Adrenal gland (tissue), 19 donors: ENCODE measurements at regions of chr1 and their contacts with region 1.

Region 1: DNA sequence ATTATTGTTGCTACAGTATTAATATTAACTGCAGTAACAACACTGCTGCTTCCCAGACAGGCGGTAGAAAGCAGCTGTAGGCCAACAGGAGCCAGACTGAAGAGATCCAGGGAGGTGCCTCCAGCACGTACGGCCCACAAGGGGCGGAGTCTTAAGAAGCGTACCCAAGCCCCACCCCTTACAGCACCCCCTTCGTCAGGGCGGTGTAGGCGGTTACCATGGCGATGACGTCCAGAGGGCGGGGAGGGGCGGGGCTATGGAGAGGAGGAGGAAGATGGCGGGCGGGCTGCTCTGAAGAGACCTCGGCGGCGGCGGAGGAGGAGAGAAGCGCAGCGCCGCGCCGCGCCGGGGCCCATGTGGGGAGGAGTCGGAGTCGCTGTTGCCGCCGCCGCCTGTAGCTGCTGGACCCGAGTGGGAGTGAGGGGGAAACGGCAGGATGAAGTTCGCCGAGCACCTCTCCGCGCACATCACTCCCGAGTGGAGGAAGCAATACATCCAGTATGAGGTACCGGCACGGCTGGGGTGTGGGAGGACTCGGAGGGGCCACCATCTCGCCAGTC is at the start of gene XPR1:
- DNase-seq: peak; percentile 99
- H3K4me3 ChIP-seq: peak within 1 kb of the TSS; percentile 50 to 94 (median 82)
- H3K27ac ChIP-seq: peak within 1 kb of the TSS; percentile 27 to 95 (median 89)
- H3K4me1 ChIP-seq: peaks cover 10 to 28% of the 10 kb centered on the region in 2 donors
- H3K27me3 ChIP-seq: no peaks in the 10 kb centered on the region
- CTCF ChIP-seq: peak; percentile 27 to 69 (median 46)
- POLR2A ChIP-seq: peak; percentile 69 to 93
- total RNA-seq, gene XPR1: 16.1 to 53.0 (median 26.2) TPM

Region 2: DNA sequence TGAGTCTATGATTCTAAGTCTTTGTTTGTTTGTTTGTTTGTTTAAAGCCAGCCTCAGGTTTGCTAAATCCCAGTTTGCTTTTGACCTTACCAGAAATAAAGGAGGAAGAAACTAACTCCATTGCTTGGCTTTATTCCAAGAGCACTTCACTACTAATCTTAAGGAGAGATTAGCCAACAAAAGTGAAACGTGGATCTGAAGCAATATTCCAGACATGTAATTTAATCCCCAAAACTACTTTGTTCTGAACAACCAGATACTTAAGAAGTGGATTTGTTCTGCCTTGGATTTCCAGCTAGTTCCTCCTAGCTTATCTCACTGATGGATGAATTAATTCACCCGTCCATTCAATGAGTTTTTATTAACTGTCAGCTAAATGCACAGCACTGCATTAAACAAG is 693.1 kb before region 1 on chr1:
- intact Hi-C with region 1: no loop called
- DNase-seq: no peak
- H3K4me3 ChIP-seq: no peak overlapping the region
- H3K27ac ChIP-seq: no peak overlapping the region
- H3K4me1 ChIP-seq: peaks cover 0 to 8% of the 10 kb centered on the region in 2 donors
- H3K27me3 ChIP-seq: no peaks in the 10 kb centered on the region
- CTCF ChIP-seq: no peak
- POLR2A ChIP-seq: no peak

Region 3: GRCh38 chr1:180533266-180533987 is 98.4 kb before region 1 on chr1:
- intact Hi-C with region 1: loop called in 1 of 2 experiments (anchors 5 kb)
- DNase-seq: peak; percentile 68 to 90 (median 77)
- H3K4me3 ChIP-seq: no peak overlapping the region
- H3K27ac ChIP-seq: no peak overlapping the region
- H3K4me1 ChIP-seq: no peaks in the 10 kb centered on the region
- H3K27me3 ChIP-seq: no peaks in the 10 kb centered on the region
- CTCF ChIP-seq: peak; percentile 71 to 93 (median 87)
- POLR2A ChIP-seq: no peak

Region 4: GRCh38 chr1:180579961-180580611 is 51.8 kb before region 1 on chr1:
- intact Hi-C with region 1: no loop called
- DNase-seq: peak; percentile 79 to 91 (median 85)
- H3K4me3 ChIP-seq: no peak overlapping the region
- H3K27ac ChIP-seq: peak overlapping the region; percentile 44 to 82 (median 51)
- H3K4me1 ChIP-seq: peaks cover 15 to 27% of the 10 kb centered on the region in 2 donors
- H3K27me3 ChIP-seq: no peaks in the 10 kb centered on the region
- CTCF ChIP-seq: no peak
- POLR2A ChIP-seq: no peak

Region 5: GRCh38 chr1:180724055-180724454 is 92.2 kb after region 1 on chr1:
- intact Hi-C with region 1: no loop called
- DNase-seq: no peak
- H3K4me3 ChIP-seq: no peak overlapping the region
- H3K27ac ChIP-seq: no peak overlapping the region
- H3K4me1 ChIP-seq: peaks cover 0 to 32% of the 10 kb centered on the region in 2 donors
- H3K27me3 ChIP-seq: no peaks in the 10 kb centered on the region
- CTCF ChIP-seq: no peak
- POLR2A ChIP-seq: no peak

Region 6: GRCh38 chr1:180851995-180852887 is 220.4 kb after region 1 on chr1:
- intact Hi-C with region 1: loop called in 1 of 2 experiments (anchors 10 kb)
- DNase-seq: no peak
- H3K4me3 ChIP-seq: no peak overlapping the region
- H3K27ac ChIP-seq: no peak overlapping the region
- H3K4me1 ChIP-seq: no peaks in the 10 kb centered on the region
- H3K27me3 ChIP-seq: no peaks in the 10 kb centered on the region
- CTCF ChIP-seq: no peak
- POLR2A ChIP-seq: no peak

Region 7: DNA sequence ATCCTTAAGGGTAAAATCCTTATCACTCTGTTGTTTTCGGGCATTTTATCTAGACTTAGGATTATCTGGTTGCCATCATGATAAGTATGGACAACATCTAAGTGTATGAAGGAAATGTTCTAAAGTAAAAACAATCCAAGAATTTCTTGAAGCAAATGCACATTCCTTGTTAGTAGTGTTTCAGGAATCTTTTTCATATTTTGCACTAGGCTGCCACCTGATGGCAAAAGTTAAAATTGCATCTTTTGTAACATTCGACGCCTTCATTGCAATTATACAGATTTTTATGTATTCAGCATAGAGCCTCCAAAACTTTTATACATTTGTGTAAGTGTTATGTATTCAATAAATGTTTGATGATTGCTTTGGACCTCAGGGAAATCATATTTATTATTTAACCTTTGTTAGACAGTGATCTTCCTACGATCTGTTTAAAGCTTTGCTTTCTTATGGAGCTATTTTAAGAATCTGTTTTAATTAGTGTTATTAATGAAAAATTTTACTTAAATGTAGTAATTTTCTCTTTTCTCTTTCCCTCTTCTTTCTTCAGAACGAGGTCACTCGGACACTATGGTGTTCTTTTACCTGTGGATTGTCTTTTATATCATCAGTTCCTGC is 231.4 kb after region 1 on chr1:
- intact Hi-C with region 1: loop called (anchors 5 to 10 kb)
- DNase-seq: peak in 3 of 7 donors; percentile 39 to 50 (median 44)
- H3K4me3 ChIP-seq: no peak overlapping the region
- H3K27ac ChIP-seq: no peak overlapping the region
- H3K4me1 ChIP-seq: no peaks in the 10 kb centered on the region
- H3K27me3 ChIP-seq: no peaks in the 10 kb centered on the region
- CTCF ChIP-seq: peak; percentile 66 to 85 (median 76)
- POLR2A ChIP-seq: no peak